Heart right ventricle (tissue), 16 donors: ENCODE measurements at regions of chr2 and their contacts with region 1.

Region 1: GRCh38 chr2:200811336-200812121 is at the start of gene BZW1:
- DNase-seq: peak; percentile 96 to 98
- ATAC-seq: peak; percentile 93 to 98 (median 96)
- H3K4me3 ChIP-seq: peak within 1 kb of the TSS; percentile 76 to 96 (median 92)
- H3K27ac ChIP-seq: peak within 1 kb of the TSS; percentile 89 to 99 (median 98)
- H3K4me1 ChIP-seq: peaks cover 3 to 47% (median 41%) of the 10 kb centered on the region in 9 donors
- H3K27me3 ChIP-seq: no peaks in the 10 kb centered on the region
- CTCF ChIP-seq: no peak
- total RNA-seq, gene BZW1: 62.5 to 133 (median 77.2) TPM

Region 2: GRCh38 chr2:200319548-200320337 is 491.8 kb before region 1 on chr2:
- intact Hi-C with region 1: loop called in 1 of 10 experiments (anchors 5 kb)
- DNase-seq: no peak
- ATAC-seq: peak in 6 of 8 donors; percentile 62 to 76 (median 72)
- H3K4me3 ChIP-seq: no peak overlapping the region
- H3K27ac ChIP-seq: peak overlapping the region in 7 of 10 donors; percentile 18 to 51 (median 41)
- H3K4me1 ChIP-seq: peaks cover 0 to 84% (median 47%) of the 10 kb centered on the region in 9 donors
- H3K27me3 ChIP-seq: no peaks in the 10 kb centered on the region
- CTCF ChIP-seq: no peak

Region 3: DNA sequence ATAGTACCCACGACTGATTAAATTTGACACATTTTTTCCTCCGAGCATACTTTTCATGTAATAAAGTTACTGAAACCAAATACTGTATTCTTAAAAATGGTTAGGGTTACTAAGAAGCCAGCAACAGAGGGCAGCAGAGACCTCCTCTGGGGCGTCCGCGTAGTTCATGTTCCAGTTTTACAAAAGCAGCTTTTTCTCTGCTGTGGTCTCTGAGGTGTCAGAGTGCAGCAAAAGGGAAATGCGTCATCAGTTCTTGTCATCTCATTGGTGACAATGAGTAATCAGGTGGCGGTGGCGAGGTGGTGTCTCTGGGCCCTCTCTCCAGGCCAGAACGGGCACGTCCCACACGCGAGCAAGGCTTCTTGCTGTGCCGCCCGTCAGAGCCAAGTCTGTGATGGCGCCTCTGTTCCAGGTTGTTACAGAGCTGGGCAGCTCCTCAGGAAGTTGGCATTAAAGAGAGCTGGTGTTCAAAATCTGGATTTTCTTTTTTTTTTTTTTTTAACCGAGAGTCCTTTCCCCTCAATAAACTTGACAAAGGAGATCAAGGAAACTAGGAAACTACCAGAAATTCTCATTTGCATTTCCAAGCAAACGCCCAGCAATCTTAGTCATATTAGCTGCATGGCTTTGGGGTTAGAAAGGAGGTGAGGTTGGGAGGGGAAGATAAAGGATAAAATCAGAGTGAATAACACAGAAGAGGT is 98.4 kb before region 1 on chr2:
- intact Hi-C with region 1: loop called (anchors 1 to 5 kb)
- DNase-seq: peak; percentile 75 to 87
- ATAC-seq: peak; percentile 95 to 98 (median 98)
- H3K4me3 ChIP-seq: peak overlapping the region in 9 of 10 donors; percentile 10 to 56 (median 40)
- H3K27ac ChIP-seq: peak overlapping the region in 9 of 10 donors; percentile 22 to 87 (median 63)
- H3K4me1 ChIP-seq: peaks cover 0 to 11% (median 0%) of the 10 kb centered on the region in 9 donors
- H3K27me3 ChIP-seq: peaks cover 0 to 4% (median 0%) of the 10 kb centered on the region in 7 donors
- CTCF ChIP-seq: peak; percentile 69 to 94 (median 87)

Region 4: DNA sequence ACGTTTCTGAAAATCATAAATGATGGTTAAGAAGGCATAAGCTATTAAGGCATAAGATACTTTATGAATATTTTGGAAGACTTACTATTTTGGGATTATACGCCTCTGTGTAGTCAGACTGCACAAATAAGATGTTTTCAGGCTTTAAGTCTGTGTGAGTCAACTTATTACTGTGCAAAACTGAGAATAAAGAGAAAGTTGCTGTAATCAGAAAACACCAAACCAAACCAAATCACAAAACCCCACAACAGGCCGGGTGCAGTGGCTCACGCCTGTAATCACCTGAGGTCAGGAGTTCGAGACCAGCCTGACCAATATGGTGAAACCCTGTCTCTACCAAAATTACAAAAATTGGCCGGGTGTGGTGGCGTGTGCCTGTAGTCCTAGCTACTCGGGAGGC is 45.3 kb after region 1 on chr2:
- intact Hi-C with region 1: loop called in 5 of 10 experiments (anchors 5 kb)
- DNase-seq: no peak
- ATAC-seq: no peak
- H3K4me3 ChIP-seq: no peak overlapping the region
- H3K27ac ChIP-seq: no peak overlapping the region
- H3K4me1 ChIP-seq: peaks cover 12 to 68% (median 45%) of the 10 kb centered on the region in 9 donors
- H3K27me3 ChIP-seq: no peaks in the 10 kb centered on the region
- CTCF ChIP-seq: no peak

Region 5: GRCh38 chr2:200864176-200864976 is 52.8 kb after region 1 on chr2 and contains the start of gene CLK1:
- intact Hi-C with region 1: loop called in 7 of 10 experiments (anchors 2 to 5 kb)
- DNase-seq: peak; percentile 98 to 99
- ATAC-seq: peak; percentile 94 to 97 (median 96)
- H3K4me3 ChIP-seq: peak within 1 kb of the TSS; percentile 73 to 98 (median 90)
- H3K27ac ChIP-seq: peak within 1 kb of the TSS; percentile 99 to 100 (median 100)
- H3K4me1 ChIP-seq: peaks cover 3 to 51% (median 34%) of the 10 kb centered on the region in 9 donors
- H3K27me3 ChIP-seq: no peaks in the 10 kb centered on the region
- CTCF ChIP-seq: no peak
- total RNA-seq, gene CLK1: 30.8 to 59.6 (median 45.3) TPM